Activated T-helper 1 cell treated with anti-CD3 and anti-CD28 coated beads, Interleukin-12 subunit alpha, Interleukin-12 subunit beta, Interleukin-2, Interleukin-4 antibody, amounts not matched to agents 30 ng/mL and 10 ng/mL and 1 ng/mL, durations not matched to agents 14 hours and 24 hours and 36 hours (primary cell): ENCODE measurements at regions of chr19 and their contacts with region 1.

Region 1: DNA sequence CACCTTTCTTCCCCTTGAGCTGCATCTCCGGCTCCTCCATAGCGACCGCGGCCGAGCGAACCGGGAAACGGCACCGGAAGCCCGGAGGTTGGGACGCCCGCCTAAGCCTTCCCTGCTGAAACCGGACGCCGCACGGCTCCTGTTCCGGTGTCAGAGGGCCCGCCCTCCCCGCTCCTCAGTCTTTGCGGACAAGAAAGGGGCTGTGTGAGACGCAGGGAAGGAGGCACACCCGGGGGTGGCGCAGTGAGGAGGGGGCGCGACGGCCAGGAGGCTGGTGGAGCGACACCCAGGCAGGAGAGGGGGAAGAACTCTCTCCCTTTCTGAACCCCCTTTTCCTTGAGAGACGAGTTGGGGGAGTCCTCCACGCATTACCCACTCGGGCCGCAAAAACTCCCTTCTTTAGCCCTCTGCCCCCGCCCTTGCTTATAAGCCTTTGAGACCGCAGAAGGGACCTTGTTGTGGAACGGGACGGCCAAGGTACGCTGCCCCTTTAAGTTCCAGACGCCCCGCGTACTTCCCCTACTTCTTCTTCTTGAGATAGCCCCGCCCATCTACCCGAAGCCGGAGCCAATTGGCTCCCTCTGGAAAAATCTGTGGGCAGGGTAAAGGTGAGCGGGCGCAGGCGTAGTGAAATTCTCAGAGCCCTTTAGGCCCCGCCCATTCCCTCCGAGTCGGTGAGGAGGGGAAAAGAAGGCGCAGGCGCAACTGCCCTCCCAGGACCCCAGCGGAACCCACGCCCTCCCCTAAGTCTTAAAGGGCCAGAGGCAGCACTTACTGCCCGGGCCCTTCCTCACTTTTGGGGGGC is at the starts of genes BORCS8 and RFXANK:
- DNase-seq: peak; percentile 99
- H3K4me3 Mint-ChIP-seq: peak within 1 kb of the TSS; percentile 96
- H3K27ac Mint-ChIP-seq: peak within 1 kb of the TSS; percentile 99
- H3K4me1 Mint-ChIP-seq: peaks cover 20% of the 10 kb centered on the region
- H3K27me3 Mint-ChIP-seq: no peaks in the 10 kb centered on the region
- total RNA-seq, gene BORCS8: 37.8 and 38.6 TPM in 2 replicates
- total RNA-seq, gene RFXANK: 101 and 103 TPM in 2 replicates

Region 2: GRCh38 chr19:19033426-19034203 is 158.7 kb before region 1 on chr19 and contains the starts of genes ARMC6 and SUGP2:
- intact Hi-C with region 1: loop called (anchors 1 kb)
- DNase-seq: peak; percentile 89
- H3K4me3 Mint-ChIP-seq: peak within 1 kb of the TSS; percentile 98
- H3K27ac Mint-ChIP-seq: peak within 1 kb of the TSS; percentile 98
- H3K4me1 Mint-ChIP-seq: peaks cover 25% of the 10 kb centered on the region
- H3K27me3 Mint-ChIP-seq: no peaks in the 10 kb centered on the region
- total RNA-seq, gene ARMC6: 54.9 and 56.5 TPM in 2 replicates
- total RNA-seq, gene SUGP2: 114 and 128 TPM in 2 replicates

Region 3: DNA sequence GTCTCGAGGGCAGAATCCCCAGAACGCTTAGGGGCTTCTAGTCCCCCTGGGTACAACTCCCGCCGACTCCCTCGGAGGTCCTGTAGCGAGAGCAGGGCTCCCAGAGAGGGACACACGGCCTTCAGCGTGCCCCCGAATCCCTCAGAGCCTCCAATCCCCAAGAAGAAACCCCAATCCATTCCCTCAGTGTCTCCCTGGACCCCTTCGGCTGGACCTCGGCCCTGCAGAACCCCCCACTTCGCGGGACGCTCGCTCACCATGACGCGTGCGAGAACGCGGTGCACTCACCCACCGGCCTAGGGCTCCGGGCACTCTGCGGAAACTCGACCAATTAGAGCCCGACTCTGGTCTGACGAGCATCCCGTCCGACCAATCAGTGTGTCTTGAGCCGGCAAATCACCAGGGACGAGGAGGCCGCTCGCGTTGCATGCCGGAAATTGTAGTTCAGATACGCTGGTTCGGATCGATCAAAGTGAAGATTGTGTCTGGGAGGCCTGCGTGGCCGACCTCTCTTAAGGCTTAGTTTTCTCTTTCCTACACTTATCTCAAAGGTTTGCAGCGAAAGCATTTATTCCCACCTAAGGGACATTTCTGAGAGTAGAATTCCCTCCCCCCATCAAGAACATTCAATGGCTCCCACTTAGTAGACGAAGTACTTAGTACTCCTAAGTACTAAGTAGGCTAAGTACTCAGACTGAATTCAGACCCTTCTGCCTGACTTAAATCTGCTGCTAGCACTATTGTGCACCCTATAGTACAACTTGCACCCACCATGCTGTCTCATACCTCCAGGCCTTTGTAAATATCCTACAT is 53.9 kb before region 1 on chr19 and contains the start of gene TMEM161A:
- intact Hi-C with region 1: loop called (anchors 1 kb)
- DNase-seq: peak; percentile 97
- H3K4me3 Mint-ChIP-seq: peak within 1 kb of the TSS; percentile 92
- H3K27ac Mint-ChIP-seq: peak within 1 kb of the TSS; percentile 93
- H3K4me1 Mint-ChIP-seq: peaks cover 22% of the 10 kb centered on the region
- H3K27me3 Mint-ChIP-seq: peaks cover 3% of the 10 kb centered on the region
- total RNA-seq, gene TMEM161A: 46.0 and 48.9 TPM in 2 replicates

Region 4: DNA sequence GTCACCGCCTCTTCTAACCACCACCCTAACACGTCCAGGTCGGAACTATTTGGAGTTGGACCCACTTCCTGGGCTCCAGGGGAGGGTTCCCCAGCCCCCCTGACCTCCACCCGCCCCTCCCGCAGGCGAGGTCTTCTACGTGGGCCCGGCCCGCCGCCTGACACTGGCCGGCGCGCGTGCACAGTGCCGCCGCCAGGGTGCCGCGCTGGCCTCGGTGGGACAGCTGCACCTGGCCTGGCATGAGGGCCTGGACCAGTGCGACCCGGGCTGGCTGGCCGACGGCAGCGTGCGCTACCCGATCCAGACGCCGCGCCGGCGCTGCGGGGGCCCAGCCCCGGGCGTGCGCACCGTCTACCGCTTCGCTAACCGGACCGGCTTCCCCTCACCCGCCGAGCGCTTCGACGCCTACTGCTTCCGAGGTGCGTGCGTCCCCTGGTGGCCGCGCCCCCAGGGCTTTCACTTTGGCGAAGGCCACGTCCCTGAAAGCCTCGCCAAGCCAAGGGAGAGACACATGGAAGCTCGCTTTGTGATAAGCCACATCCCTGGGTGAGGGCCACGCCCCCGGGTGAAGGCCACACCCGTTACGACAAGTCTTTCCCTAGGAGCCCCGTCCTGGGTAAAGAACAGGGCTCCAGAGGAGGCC is 32.7 kb after region 1 on chr19:
- intact Hi-C with region 1: loop called (anchors 2 kb)
- DNase-seq: peak; percentile 72
- H3K4me3 Mint-ChIP-seq: peak overlapping the region; percentile 81
- H3K27ac Mint-ChIP-seq: peak overlapping the region; percentile 31
- H3K4me1 Mint-ChIP-seq: peaks cover 8% of the 10 kb centered on the region
- H3K27me3 Mint-ChIP-seq: peaks cover 15% of the 10 kb centered on the region

Region 5: GRCh38 chr19:19404879-19405860 is 212.9 kb after region 1 on chr19 and contains the start of gene GATAD2A:
- intact Hi-C with region 1: loop called (anchors 1 kb)
- DNase-seq: peak; percentile 88
- H3K4me3 Mint-ChIP-seq: peak within 1 kb of the TSS; percentile 99
- H3K27ac Mint-ChIP-seq: peak within 1 kb of the TSS; percentile 97
- H3K4me1 Mint-ChIP-seq: peaks cover 60% of the 10 kb centered on the region
- H3K27me3 Mint-ChIP-seq: no peaks in the 10 kb centered on the region
- total RNA-seq, gene GATAD2A: 139 and 142 TPM in 2 replicates